Natural killer cell (primary cell): ENCODE measurements at regions of chr12 and their contacts with region 1.

Region 1: DNA sequence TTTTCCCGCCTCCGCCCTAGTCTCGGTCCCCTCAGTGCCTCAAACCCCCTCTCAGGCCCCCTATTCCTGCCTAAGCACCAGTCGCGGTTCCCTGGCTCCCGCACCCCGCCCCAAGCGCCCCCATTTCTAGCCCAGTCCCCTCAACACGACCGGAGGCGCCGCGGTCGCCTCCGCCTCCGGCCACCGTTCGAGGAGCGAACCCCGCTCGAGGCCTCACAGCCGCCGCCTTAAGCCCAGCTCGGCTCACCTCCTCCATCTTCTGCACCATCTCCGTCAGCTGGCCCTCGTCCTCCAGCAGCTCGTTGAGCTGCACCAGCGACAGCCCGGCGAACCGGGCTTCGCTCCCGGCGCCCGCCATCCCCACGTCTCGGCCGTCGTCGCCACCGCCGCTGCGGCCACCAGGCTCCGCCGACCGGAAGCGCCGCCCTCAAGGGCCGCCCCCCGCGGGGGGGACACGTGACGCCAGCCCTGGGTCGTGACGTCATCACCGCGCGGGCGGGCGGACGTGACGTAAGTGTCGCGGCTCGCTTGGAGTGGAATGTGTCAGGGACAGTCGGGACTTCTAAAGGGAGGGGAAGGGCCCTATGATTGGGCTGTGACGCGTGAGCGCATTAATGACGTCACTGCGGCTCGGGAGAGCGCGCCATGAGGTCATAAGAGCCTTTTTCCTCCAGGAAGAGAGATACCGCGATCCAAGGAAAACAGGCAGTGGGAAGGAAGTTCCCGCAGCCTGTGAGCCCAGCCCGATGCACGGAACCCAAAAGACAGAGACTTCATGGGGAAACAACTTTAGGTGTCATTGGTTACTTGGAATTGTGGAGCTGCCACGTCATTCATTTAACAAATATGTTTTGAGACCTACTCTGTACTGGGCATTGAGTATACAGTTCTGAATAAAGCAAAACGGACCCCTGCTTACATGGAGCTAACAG is at the start of gene VPS37B:
- DNase-seq: peak; percentile 95 to 98
- ATAC-seq: peak; percentile 61 to 85 (median 77)
- H3K4me3 ChIP-seq: peak within 1 kb of the TSS; percentile 92
- H3K4me3 Mint-ChIP-seq: peak within 1 kb of the TSS; percentile 99
- H3K27ac ChIP-seq: peak within 1 kb of the TSS; percentile 99
- H3K27ac Mint-ChIP-seq: peak within 1 kb of the TSS; percentile 100
- H3K4me1 ChIP-seq: peaks cover 83% of the 10 kb centered on the region
- H3K4me1 Mint-ChIP-seq: peaks cover 82 to 90% of the 10 kb centered on the region in 2 donors
- H3K27me3 ChIP-seq: no peaks in the 10 kb centered on the region
- H3K27me3 Mint-ChIP-seq: no peaks in the 10 kb centered on the region
- CTCF ChIP-seq: no peak
- total RNA-seq, gene VPS37B: 142 to 167 (median 165) TPM

Region 2: DNA sequence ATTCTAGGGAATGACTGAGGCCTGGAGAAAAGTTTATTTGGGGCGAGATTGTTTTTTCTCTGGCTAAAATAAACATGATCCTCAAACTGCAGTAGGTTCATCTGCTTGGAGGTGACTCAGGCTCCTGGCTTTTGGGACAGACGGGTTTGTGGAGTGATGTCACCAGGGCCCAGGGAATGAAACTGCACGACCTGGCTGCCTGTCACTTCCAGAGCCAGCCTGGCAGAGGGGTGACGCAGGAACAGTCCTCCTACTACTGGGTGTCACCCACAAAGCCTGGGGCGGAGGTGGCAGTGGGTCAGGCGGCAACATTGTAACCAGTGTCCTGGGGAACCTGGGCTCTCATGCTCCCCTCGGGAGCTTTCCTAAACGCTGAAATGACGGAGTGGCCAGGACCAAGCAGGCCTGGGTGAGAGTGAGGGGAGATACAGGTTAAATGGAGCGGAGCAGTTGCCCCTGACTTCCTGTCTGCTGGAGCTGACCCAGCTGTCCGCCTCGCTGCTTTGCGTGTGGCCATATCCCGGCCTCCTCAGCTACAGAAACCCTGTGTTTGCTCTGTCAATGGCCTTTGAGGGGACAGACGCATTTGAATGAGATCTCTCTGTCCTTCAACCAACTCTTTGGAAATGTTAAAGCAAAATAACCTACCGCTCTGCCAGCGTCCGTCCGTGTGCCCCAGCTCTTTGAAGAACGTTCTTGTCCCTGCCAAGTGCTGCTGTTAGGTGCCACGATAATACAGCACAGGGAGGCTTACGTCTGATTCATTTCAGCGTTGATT is 54.2 kb before region 1 on chr12:
- intact Hi-C with region 1: no loop called
- DNase-seq: no peak
- ATAC-seq: no peak
- H3K4me3 ChIP-seq: no peak overlapping the region
- H3K4me3 Mint-ChIP-seq: no peak overlapping the region
- H3K27ac ChIP-seq: no peak overlapping the region
- H3K27ac Mint-ChIP-seq: peak overlapping the region; percentile 7 to 8
- H3K4me1 ChIP-seq: peaks cover 11% of the 10 kb centered on the region
- H3K4me1 Mint-ChIP-seq: peaks cover 37 to 44% of the 10 kb centered on the region in 2 donors
- H3K27me3 ChIP-seq: no peaks in the 10 kb centered on the region
- H3K27me3 Mint-ChIP-seq: no peaks in the 10 kb centered on the region
- CTCF ChIP-seq: no peak

Region 3: GRCh38 chr12:122860346-122861090 is 35.5 kb before region 1 on chr12:
- intact Hi-C with region 1: loop called (anchors 5 kb)
- DNase-seq: peak; percentile 81 to 88
- ATAC-seq: peak; percentile 63 to 81 (median 71)
- H3K4me3 ChIP-seq: no peak overlapping the region
- H3K4me3 Mint-ChIP-seq: no peak overlapping the region
- H3K27ac ChIP-seq: no peak overlapping the region
- H3K27ac Mint-ChIP-seq: peak overlapping the region; percentile 45 to 57
- H3K4me1 ChIP-seq: peaks cover 23% of the 10 kb centered on the region
- H3K4me1 Mint-ChIP-seq: peaks cover 7 to 12% of the 10 kb centered on the region in 2 donors
- H3K27me3 ChIP-seq: no peaks in the 10 kb centered on the region
- H3K27me3 Mint-ChIP-seq: no peaks in the 10 kb centered on the region
- CTCF ChIP-seq: peak; percentile 75

Region 4: GRCh38 chr12:122880668-122881067 is 15.3 kb before region 1 on chr12:
- intact Hi-C with region 1: loop called (anchors 2 kb)
- DNase-seq: peak; percentile 21 to 57
- ATAC-seq: peak; percentile 57 to 71 (median 58)
- H3K4me3 ChIP-seq: no peak overlapping the region
- H3K4me3 Mint-ChIP-seq: peak overlapping the region; percentile 83
- H3K27ac ChIP-seq: no peak overlapping the region
- H3K27ac Mint-ChIP-seq: peak overlapping the region; percentile 81 to 88
- H3K4me1 ChIP-seq: peaks cover 69% of the 10 kb centered on the region
- H3K4me1 Mint-ChIP-seq: peaks cover 89 to 90% of the 10 kb centered on the region in 2 donors
- H3K27me3 ChIP-seq: no peaks in the 10 kb centered on the region
- H3K27me3 Mint-ChIP-seq: no peaks in the 10 kb centered on the region
- CTCF ChIP-seq: peak; percentile 25

Region 5: DNA sequence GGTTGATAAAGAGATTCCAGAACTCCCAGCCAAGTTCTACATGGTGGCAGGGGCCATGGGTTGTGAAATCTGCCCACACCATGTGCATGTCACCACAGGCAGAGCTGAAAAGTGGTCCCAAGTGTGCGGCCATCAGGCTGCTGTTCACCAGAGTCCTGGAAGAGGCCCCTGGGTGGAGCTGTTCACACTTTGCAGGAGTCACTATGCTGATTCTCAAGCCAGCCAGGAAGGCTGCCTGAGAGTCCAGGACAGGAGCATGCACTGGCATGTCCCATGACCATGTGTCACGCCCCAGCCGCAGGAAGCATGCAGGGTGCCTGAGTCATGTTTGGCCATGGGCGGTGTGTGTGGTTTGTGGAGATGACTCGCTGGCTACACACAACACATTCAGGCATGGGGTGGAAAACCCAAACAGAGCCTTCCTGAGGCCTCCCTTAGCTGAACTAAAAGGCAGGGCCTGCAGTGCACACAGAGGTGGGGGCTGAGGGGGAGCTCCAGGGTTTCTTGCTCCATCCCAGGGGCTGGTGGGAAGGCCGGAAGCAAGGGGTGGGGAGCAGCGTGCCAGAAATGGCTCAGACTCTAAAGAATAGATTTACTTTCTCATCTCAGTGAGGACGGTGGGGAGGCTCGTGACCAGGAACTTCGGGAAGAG is 50.8 kb after region 1 on chr12:
- intact Hi-C with region 1: loop called (anchors 1 kb)
- DNase-seq: peak; percentile 71 to 84
- ATAC-seq: peak; percentile 73 to 83 (median 83)
- H3K4me3 ChIP-seq: no peak overlapping the region
- H3K4me3 Mint-ChIP-seq: peak overlapping the region; percentile 89
- H3K27ac ChIP-seq: peak overlapping the region; percentile 23
- H3K27ac Mint-ChIP-seq: peak overlapping the region; percentile 89 to 94
- H3K4me1 ChIP-seq: peaks cover 60% of the 10 kb centered on the region
- H3K4me1 Mint-ChIP-seq: peaks cover 42 to 65% of the 10 kb centered on the region in 2 donors
- H3K27me3 ChIP-seq: no peaks in the 10 kb centered on the region
- H3K27me3 Mint-ChIP-seq: no peaks in the 10 kb centered on the region
- CTCF ChIP-seq: no peak

Region 6: GRCh38 chr12:122965851-122966722 is 70.1 kb after region 1 on chr12 and contains the start of gene ABCB9:
- intact Hi-C with region 1: no loop called
- DNase-seq: peak; percentile 80 to 96
- ATAC-seq: peak; percentile 98 to 99 (median 98)
- H3K4me3 ChIP-seq: peak within 1 kb of the TSS; percentile 48
- H3K4me3 Mint-ChIP-seq: peak within 1 kb of the TSS; percentile 45
- H3K27ac ChIP-seq: peak within 1 kb of the TSS; percentile 39
- H3K27ac Mint-ChIP-seq: peak within 1 kb of the TSS in 1 of 2 donors; percentile 65
- H3K4me1 ChIP-seq: peaks cover 16% of the 10 kb centered on the region
- H3K4me1 Mint-ChIP-seq: peaks cover 4 to 7% of the 10 kb centered on the region in 2 donors
- H3K27me3 ChIP-seq: no peaks in the 10 kb centered on the region
- H3K27me3 Mint-ChIP-seq: no peaks in the 10 kb centered on the region
- CTCF ChIP-seq: no peak
- total RNA-seq, gene ABCB9: 2.4 to 4.0 (median 3.3) TPM

Region 7: DNA sequence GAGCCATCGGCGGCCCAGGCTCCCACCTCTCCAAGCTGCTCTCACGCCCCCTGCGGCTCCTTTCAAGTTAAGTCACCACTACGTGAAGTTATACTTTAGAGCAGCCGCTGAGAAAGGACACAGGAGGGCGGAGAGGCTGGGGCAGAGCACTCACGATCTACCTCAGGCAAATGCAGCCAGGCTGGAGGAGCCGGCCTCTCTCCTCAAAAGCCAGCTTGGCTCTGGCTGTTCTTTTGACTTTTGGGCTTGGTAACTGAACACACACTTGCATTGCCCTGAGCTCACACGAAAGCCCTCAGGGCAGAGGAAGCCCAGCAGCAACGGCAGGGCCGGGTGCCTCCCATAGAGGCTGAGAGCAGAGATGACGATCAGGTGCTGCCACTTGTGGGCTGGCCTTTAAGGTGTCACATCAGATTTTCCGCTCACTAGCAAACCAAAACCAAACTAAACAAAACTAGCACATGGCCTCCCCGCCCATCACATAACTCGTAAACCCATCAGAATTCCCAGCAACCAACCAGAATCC is 179.7 kb after region 1 on chr12:
- intact Hi-C with region 1: loop called (anchors 5 kb)
- DNase-seq: peak; percentile 73 to 84
- ATAC-seq: peak; percentile 78 to 86 (median 83)
- H3K4me3 ChIP-seq: peak overlapping the region; percentile 58
- H3K4me3 Mint-ChIP-seq: peak overlapping the region; percentile 96
- H3K27ac ChIP-seq: peak overlapping the region; percentile 94
- H3K27ac Mint-ChIP-seq: peak overlapping the region; percentile 97 to 98
- H3K4me1 ChIP-seq: peaks cover 73% of the 10 kb centered on the region
- H3K4me1 Mint-ChIP-seq: peaks cover 67 to 85% of the 10 kb centered on the region in 2 donors
- H3K27me3 ChIP-seq: no peaks in the 10 kb centered on the region
- H3K27me3 Mint-ChIP-seq: no peaks in the 10 kb centered on the region
- CTCF ChIP-seq: peak; percentile 32

Region 8: GRCh38 chr12:123085730-123086487 is 189.9 kb after region 1 on chr12:
- intact Hi-C with region 1: no loop called
- DNase-seq: no peak
- ATAC-seq: peak in 1 of 3 donors; percentile 36
- H3K4me3 ChIP-seq: no peak overlapping the region
- H3K4me3 Mint-ChIP-seq: no peak overlapping the region
- H3K27ac ChIP-seq: no peak overlapping the region
- H3K27ac Mint-ChIP-seq: no peak overlapping the region
- H3K4me1 ChIP-seq: peaks cover 44% of the 10 kb centered on the region
- H3K4me1 Mint-ChIP-seq: peaks cover 21 to 32% of the 10 kb centered on the region in 2 donors
- H3K27me3 ChIP-seq: no peaks in the 10 kb centered on the region
- H3K27me3 Mint-ChIP-seq: no peaks in the 10 kb centered on the region
- CTCF ChIP-seq: no peak